Astrocyte of the cerebellum (primary cell): ENCODE measurements at regions of chr6 and their contacts with region 1.

Region 1: GRCh38 chr6:84269947-84270733 is 42.7 kb upstream of the CEP162 start:
- DNase-seq: no peak
- H3K4me3 ChIP-seq: no peak overlapping the region
- CTCF ChIP-seq: no peak

Region 2: DNA sequence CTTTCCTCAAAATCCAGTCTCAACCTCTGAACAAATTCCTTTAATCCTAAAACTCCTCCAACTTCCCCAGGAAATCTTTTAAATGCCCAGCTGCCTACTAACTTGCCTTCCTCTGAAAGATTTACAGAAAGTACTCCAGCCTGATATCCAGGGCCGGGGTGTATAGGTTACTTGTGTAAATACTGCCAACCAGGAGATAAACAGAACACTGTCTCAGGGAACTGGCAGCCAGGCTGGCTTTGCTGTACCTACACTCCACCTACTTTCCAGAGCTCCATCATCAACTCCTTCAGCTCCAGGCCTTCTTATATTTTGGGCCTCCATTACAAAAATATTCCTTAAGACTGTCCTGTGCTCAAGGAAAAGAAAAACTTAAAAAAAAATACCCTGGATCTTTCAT is 128.6 kb before region 1 on chr6:
- in situ Hi-C with region 1: no loop called
- DNase-seq: no peak
- H3K4me3 ChIP-seq: no peak overlapping the region
- CTCF ChIP-seq: no peak

Region 3: GRCh38 chr6:84309336-84309735 is 39.2 kb after region 1 on chr6:
- in situ Hi-C with region 1: loop called (anchors 5 kb)
- DNase-seq: no peak
- H3K4me3 ChIP-seq: no peak overlapping the region
- CTCF ChIP-seq: no peak

Region 4: GRCh38 chr6:84353459-84354423 is 83.6 kb after region 1 on chr6:
- in situ Hi-C with region 1: no loop called
- DNase-seq: no peak
- H3K4me3 ChIP-seq: no peak overlapping the region
- CTCF ChIP-seq: no peak